ENCODE measurements at regions of chr19 and their contacts with region 1.

Region 1: GRCh38 chr19:34573226-34573864 is 91.8 kb downstream of the WTIP start:
- DNase-seq: no peak
- H3K4me3 ChIP-seq: no peak overlapping the region
- H3K4me3 Mint-ChIP-seq: peak overlapping the region in 1 of 7 donors; percentile 25
- H3K27ac ChIP-seq: no peak overlapping the region
- H3K27ac Mint-ChIP-seq: no peak overlapping the region
- H3K4me1 ChIP-seq: no peaks in the 10 kb centered on the region
- H3K4me1 Mint-ChIP-seq: peaks cover 0 to 5% (median 5%) of the 10 kb centered on the region in 3 donors
- H3K27me3 ChIP-seq: no peaks in the 10 kb centered on the region
- H3K27me3 Mint-ChIP-seq: peaks cover 14% of the 10 kb centered on the region in 2 donors

Region 2: DNA sequence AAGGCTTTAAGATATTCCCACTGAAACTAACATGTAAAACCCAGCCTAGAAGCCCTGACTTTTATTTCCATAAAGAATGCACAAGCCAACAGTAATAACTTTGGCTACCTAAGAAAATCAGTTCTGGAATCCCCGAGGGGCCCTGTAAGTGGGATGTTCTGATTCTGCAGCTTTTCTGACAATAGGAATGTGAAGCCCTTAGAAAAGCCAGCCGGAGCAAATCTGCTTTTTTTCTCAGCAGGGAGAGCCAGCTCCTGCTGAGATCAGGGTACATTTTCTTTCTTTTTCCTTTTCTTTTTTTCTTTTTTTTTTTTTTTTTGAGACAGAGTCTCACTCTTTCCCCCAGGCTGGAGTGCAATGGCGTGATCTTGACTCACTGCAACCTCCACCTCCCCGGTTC is 327.0 kb before region 1 on chr19:
- CTCF ChIA-PET with region 1: no interaction called
- POLR2A ChIA-PET with region 1: interaction called, 12 read pairs
- DNase-seq: no peak
- H3K4me3 ChIP-seq: no peak overlapping the region
- H3K4me3 Mint-ChIP-seq: no peak overlapping the region
- H3K27ac ChIP-seq: no peak overlapping the region
- H3K27ac Mint-ChIP-seq: no peak overlapping the region
- H3K4me1 ChIP-seq: no peaks in the 10 kb centered on the region
- H3K4me1 Mint-ChIP-seq: no peaks in the 10 kb centered on the region
- H3K27me3 ChIP-seq: no peaks in the 10 kb centered on the region
- H3K27me3 Mint-ChIP-seq: no peaks in the 10 kb centered on the region

Region 3: GRCh38 chr19:34540811-34541557 is 32.4 kb before region 1 on chr19:
- CTCF ChIA-PET with region 1: no interaction called
- POLR2A ChIA-PET with region 1: no interaction called
- DNase-seq: no peak
- H3K4me3 ChIP-seq: no peak overlapping the region
- H3K4me3 Mint-ChIP-seq: no peak overlapping the region
- H3K27ac ChIP-seq: no peak overlapping the region
- H3K27ac Mint-ChIP-seq: no peak overlapping the region
- H3K4me1 ChIP-seq: no peaks in the 10 kb centered on the region
- H3K4me1 Mint-ChIP-seq: no peaks in the 10 kb centered on the region
- H3K27me3 ChIP-seq: no peaks in the 10 kb centered on the region
- H3K27me3 Mint-ChIP-seq: peaks cover 9 to 42% of the 10 kb centered on the region in 2 donors

Region 4: DNA sequence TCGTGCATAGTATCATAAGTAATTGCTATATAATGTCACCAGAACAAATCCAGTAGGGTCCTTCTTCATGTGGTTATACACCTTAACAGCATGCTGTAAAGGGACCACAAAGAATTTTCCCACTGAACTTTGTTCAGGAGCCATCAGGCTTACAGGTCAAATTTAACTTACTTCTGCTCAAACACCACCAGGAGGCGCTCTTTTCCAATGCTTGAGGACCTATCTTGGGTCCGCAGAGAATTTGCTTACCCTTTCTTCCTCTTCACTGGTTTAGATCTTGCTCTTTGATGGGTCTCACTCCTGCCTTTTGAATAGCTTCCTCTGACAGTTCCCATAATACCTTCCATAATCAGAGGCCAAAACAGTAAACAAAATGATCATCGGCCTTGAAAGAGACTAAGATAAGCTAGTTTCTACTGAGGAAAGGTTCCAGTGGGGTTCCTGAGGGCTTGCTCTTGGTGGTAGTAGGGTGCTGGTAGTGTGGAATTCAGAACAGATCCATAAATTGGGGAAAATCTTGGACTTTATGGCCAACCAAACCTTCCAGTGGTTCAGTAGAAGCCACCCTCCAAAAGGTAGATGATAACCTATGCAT is 66.2 kb after region 1 on chr19:
- CTCF ChIA-PET with region 1: no interaction called
- POLR2A ChIA-PET with region 1: no interaction called
- DNase-seq: peak; percentile 31 to 68 (median 46)
- H3K4me3 ChIP-seq: no peak overlapping the region
- H3K4me3 Mint-ChIP-seq: no peak overlapping the region
- H3K27ac ChIP-seq: no peak overlapping the region
- H3K27ac Mint-ChIP-seq: no peak overlapping the region
- H3K4me1 ChIP-seq: peaks cover 3% of the 10 kb centered on the region
- H3K4me1 Mint-ChIP-seq: peaks cover 0 to 4% (median 0%) of the 10 kb centered on the region in 3 donors
- H3K27me3 ChIP-seq: no peaks in the 10 kb centered on the region
- H3K27me3 Mint-ChIP-seq: peaks cover 0 to 2% of the 10 kb centered on the region in 2 donors